Psoas muscle (tissue), 8 donors: ENCODE measurements at regions of chr15 and their contacts with region 1.

Region 1: DNA sequence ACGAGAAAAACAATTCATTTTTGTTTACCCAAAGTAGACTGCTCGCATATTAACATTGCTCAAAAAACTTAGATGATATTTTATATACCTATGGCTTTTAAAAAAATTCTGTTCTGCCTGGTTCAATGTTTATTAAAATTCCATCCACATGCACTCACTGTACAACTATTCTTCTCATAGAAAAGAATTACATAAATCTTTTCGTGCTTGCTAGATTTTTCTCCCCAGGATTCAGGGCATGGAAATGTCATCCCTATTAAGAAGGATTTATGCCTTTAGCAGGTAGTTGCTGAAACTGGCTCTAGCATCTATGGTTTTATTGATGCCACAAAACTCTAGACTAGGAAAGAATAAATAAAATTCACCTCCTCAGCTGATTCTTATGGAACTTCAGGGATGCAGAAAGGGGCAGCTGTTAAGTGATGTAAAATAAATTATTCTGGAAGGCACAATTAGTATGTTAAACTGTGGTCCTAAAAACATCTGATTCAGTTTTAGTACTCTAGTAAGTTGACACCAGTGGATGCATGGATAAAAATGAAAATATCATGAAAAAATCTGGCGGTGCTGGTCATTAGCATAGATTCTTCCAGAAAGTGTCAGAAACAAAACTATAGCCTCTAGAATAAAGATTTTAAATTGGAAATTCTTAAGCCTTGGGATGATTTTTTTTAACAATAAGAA is 41.6 kb downstream of the AAGAB start:
- DNase-seq: no peak
- ATAC-seq: no peak
- H3K4me3 ChIP-seq: no peak overlapping the region
- H3K27ac ChIP-seq: no peak overlapping the region
- H3K4me1 ChIP-seq: peaks cover 7% of the 10 kb centered on the region
- H3K27me3 ChIP-seq: no peaks in the 10 kb centered on the region
- CTCF ChIP-seq: no peak

Region 2: GRCh38 chr15:67024314-67024997 is 188.4 kb before region 1 on chr15:
- intact Hi-C with region 1: no loop called
- DNase-seq: peak; percentile 71 to 83
- ATAC-seq: peak; percentile 90 to 97 (median 91)
- H3K4me3 ChIP-seq: no peak overlapping the region
- H3K27ac ChIP-seq: peak overlapping the region; percentile 76
- H3K4me1 ChIP-seq: peaks cover 31% of the 10 kb centered on the region
- H3K27me3 ChIP-seq: no peaks in the 10 kb centered on the region
- CTCF ChIP-seq: no peak

Region 3: GRCh38 chr15:67240235-67241131 is 27.7 kb after region 1 on chr15:
- intact Hi-C with region 1: loop called in 1 of 2 experiments (anchors 5 kb)
- DNase-seq: no peak
- ATAC-seq: peak in 3 of 4 donors; percentile 54 to 73 (median 62)
- H3K4me3 ChIP-seq: no peak overlapping the region
- H3K27ac ChIP-seq: no peak overlapping the region
- H3K4me1 ChIP-seq: peaks cover 21% of the 10 kb centered on the region
- H3K27me3 ChIP-seq: no peaks in the 10 kb centered on the region
- CTCF ChIP-seq: peak; percentile 23

Region 4: GRCh38 chr15:67274236-67274635 is 61.4 kb after region 1 on chr15:
- intact Hi-C with region 1: no loop called
- DNase-seq: no peak
- ATAC-seq: no peak
- H3K4me3 ChIP-seq: no peak overlapping the region
- H3K27ac ChIP-seq: no peak overlapping the region
- H3K4me1 ChIP-seq: no peaks in the 10 kb centered on the region
- H3K27me3 ChIP-seq: no peaks in the 10 kb centered on the region
- CTCF ChIP-seq: no peak

Region 5: DNA sequence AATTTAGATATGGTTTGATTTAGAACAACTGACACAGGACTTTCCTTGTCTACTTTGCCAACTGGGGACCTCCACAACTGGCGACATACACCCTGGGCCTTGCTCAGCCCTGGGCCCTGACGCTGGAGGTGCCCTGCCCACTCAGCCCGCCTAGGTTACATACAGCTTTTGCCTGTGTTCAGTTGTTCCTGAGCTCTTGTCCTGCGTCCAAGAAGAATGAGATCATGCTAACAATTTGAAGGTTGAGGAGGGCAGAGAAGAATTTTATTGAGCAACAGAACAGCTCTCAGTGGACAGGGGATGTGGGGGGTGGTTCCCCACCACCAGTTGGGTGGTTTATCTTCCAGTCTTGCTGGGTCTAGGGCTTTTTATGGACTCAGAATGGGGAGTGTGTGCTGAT is 109.7 kb after region 1 on chr15:
- intact Hi-C with region 1: no loop called
- DNase-seq: no peak
- ATAC-seq: peak in 2 of 4 donors; percentile 42 to 43
- H3K4me3 ChIP-seq: no peak overlapping the region
- H3K27ac ChIP-seq: no peak overlapping the region
- H3K4me1 ChIP-seq: no peaks in the 10 kb centered on the region
- H3K27me3 ChIP-seq: no peaks in the 10 kb centered on the region
- CTCF ChIP-seq: no peak